ENCODE measurements at regions of chr1 and their contacts with region 1.

Region 1: GRCh38 chr1:204814181-204814884 is 56.3 kb upstream of the NFASC start:
- DNase-seq: no peak
- ATAC-seq: peak; percentile 93

Region 2: GRCh38 chr1:203581841-203582240 is 1232.5 kb before region 1 on chr1:
- intact Hi-C with region 1: no loop called
- DNase-seq: no peak
- ATAC-seq: no peak

Region 3: GRCh38 chr1:204842892-204843291 is 28.6 kb after region 1 on chr1:
- intact Hi-C with region 1: no loop called
- DNase-seq: no peak
- ATAC-seq: peak; percentile 60

Region 4: DNA sequence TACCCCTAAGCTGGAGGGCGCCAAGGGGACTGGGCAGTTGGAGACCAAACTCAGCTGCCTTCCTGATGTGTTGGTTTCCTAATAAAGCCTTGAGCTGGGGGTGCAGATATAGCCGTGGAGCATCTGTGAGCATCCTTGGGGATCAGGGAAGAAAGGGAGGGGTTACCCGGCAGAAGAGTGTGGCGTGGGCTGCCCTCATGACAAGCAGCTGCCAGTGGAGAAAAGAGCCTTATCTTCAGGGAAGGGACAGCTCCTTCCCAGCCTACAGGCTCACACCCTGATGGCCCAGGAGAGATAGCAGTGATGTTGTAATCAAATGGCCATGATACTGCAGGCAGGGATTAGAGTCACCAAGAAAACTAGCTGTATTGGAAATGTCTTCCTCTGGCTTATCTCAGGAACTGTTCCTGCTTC is 45.5 kb after region 1 on chr1:
- intact Hi-C with region 1: loop called (anchors 5 kb)
- DNase-seq: no peak
- ATAC-seq: peak; percentile 77

Region 5: DNA sequence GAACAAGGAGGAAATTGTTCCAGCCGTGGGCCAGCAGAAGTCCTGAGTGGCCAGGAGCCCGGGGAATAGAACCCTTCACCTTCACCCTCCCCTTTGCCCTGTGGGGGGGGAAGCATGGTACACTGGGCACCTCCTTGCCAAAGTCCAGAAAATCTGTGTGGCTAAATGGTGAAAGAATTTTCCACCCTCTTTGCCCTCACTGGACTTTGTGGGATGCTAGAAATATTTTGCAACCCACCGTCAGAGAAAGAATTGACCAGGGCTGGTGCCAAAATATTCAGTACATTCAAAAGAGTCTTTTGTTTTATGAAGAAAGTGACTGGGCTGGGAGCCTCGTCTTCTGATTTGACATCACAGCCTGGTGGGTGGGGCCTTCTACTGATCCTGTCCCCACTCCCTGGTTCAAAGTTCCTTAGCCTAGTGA is 71.0 kb after region 1 on chr1:
- intact Hi-C with region 1: loop called (anchors 5 kb)
- DNase-seq: no peak
- ATAC-seq: peak; percentile 67

Region 6: GRCh38 chr1:204961765-204962419 is 147.6 kb after region 1 on chr1:
- intact Hi-C with region 1: loop called (anchors 5 kb)
- DNase-seq: no peak
- ATAC-seq: no peak